ENCODE measurements at regions of chr1 and their contacts with region 1.

Region 1: GRCh38 chr1:214551436-214552173 is at the start of gene PTPN14:
- DNase-seq: peak; percentile 96
- ATAC-seq: peak; percentile 88
- H3K4me3 ChIP-seq: peak within 1 kb of the TSS; percentile 76
- H3K27ac ChIP-seq: peak within 1 kb of the TSS; percentile 97
- H3K4me1 ChIP-seq: peaks cover 6% of the 10 kb centered on the region
- H3K27me3 ChIP-seq: no peaks in the 10 kb centered on the region
- CTCF ChIP-seq: peak; percentile 59
- POLR2A ChIP-seq: peak; percentile 81
- RAD21 ChIP-seq: peak; percentile 37; the same call in 1 of the 2 replicates
- total RNA-seq, gene PTPN14: 31.7 and 42.8 TPM in 2 replicates

Region 2: DNA sequence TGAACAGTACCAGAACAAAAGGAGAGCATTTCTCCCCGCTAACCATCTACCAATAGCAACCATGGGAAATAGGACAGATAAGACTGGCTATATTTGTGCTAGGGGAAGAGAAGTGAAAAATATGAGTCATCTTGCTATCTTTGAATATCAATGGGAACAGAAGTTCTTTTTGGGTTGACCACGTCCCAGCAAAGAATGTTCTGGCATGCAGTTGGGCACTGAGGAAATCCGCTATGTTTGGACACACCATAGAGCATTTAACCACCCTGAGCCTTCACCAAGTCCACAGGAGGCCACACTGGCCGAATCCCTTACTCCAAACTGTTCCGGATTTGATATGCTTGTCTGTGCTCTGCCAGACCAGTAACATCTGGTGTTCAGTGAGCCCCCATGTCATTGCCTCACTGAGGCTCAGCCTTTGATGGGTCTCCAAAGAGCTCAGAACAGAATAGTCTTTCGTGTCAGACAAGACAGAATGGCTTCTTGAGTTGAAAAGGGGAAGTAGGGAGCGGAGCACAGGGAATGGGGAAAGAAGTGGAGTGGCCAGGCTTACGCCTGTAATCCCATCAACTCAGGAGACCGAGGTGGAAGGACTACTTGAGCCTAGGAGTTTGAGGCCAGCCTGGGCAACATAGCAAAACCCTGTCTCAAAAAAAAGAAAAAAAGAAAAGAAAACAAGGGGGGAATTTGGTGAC is 189.3 kb before region 1 on chr1:
- CTCF ChIA-PET with region 1: no interaction called
- POLR2A ChIA-PET with region 1: no interaction called
- dilution Hi-C with region 1: no loop called
- in situ Hi-C with region 1: no loop called
- intact Hi-C with region 1: no loop called
- DNase-seq: peak; percentile 32
- ATAC-seq: peak; percentile 29; the same call in 1 of the 2 replicates
- H3K4me3 ChIP-seq: no peak overlapping the region
- H3K27ac ChIP-seq: no peak overlapping the region
- H3K4me1 ChIP-seq: no peaks in the 10 kb centered on the region
- H3K27me3 ChIP-seq: no peaks in the 10 kb centered on the region
- CTCF ChIP-seq: no peak
- POLR2A ChIP-seq: no peak
- RAD21 ChIP-seq: no peak

Region 3: GRCh38 chr1:214377886-214378285 is 173.7 kb before region 1 on chr1:
- CTCF ChIA-PET with region 1: no interaction called
- POLR2A ChIA-PET with region 1: no interaction called
- dilution Hi-C with region 1: no loop called
- in situ Hi-C with region 1: no loop called
- intact Hi-C with region 1: loop called (anchors 5 kb)
- DNase-seq: peak; percentile 80
- ATAC-seq: peak; percentile 89
- H3K4me3 ChIP-seq: no peak overlapping the region
- H3K27ac ChIP-seq: peak overlapping the region; percentile 76; the same call in 1 of the 2 replicates
- H3K4me1 ChIP-seq: peaks cover 13% of the 10 kb centered on the region
- H3K27me3 ChIP-seq: no peaks in the 10 kb centered on the region
- CTCF ChIP-seq: no peak
- POLR2A ChIP-seq: no peak
- RAD21 ChIP-seq: no peak

Region 4: GRCh38 chr1:214446772-214447556 is 104.6 kb before region 1 on chr1:
- CTCF ChIA-PET with region 1: no interaction called
- POLR2A ChIA-PET with region 1: interaction called, 3 read pairs
- dilution Hi-C with region 1: no loop called
- in situ Hi-C with region 1: no loop called
- intact Hi-C with region 1: loop called (anchors 2 kb)
- DNase-seq: peak; percentile 93
- ATAC-seq: peak; percentile 80
- H3K4me3 ChIP-seq: peak overlapping the region; percentile 22; the same call in 1 of the 2 replicates
- H3K27ac ChIP-seq: peak overlapping the region; percentile 85
- H3K4me1 ChIP-seq: peaks cover 15% of the 10 kb centered on the region
- H3K27me3 ChIP-seq: no peaks in the 10 kb centered on the region
- CTCF ChIP-seq: no peak
- POLR2A ChIP-seq: peak; percentile 30
- RAD21 ChIP-seq: 0 out of 2 replicates have a peak, but pooled peaks have one; percentile 6

Region 5: GRCh38 chr1:214506972-214507482 is 44.6 kb before region 1 on chr1:
- CTCF ChIA-PET with region 1: no interaction called
- POLR2A ChIA-PET with region 1: no interaction called
- dilution Hi-C with region 1: no loop called
- in situ Hi-C with region 1: no loop called
- intact Hi-C with region 1: no loop called
- DNase-seq: no peak
- ATAC-seq: no peak
- H3K4me3 ChIP-seq: no peak overlapping the region
- H3K27ac ChIP-seq: no peak overlapping the region
- H3K4me1 ChIP-seq: 0 out of 2 replicates have a peak, but pooled peaks cover 7% of the 10 kb centered on the region
- H3K27me3 ChIP-seq: no peaks in the 10 kb centered on the region
- CTCF ChIP-seq: no peak
- POLR2A ChIP-seq: no peak
- RAD21 ChIP-seq: no peak

Region 6: GRCh38 chr1:214584805-214585766 is 33.5 kb after region 1 on chr1:
- CTCF ChIA-PET with region 1: interaction called, 5 read pairs
- POLR2A ChIA-PET with region 1: interaction called, 3 read pairs
- dilution Hi-C with region 1: no loop called
- in situ Hi-C with region 1: no loop called
- intact Hi-C with region 1: loop called (anchors 1 kb)
- DNase-seq: peak; percentile 73
- ATAC-seq: peak; percentile 85
- H3K4me3 ChIP-seq: no peak overlapping the region
- H3K27ac ChIP-seq: no peak overlapping the region
- H3K4me1 ChIP-seq: peaks cover 2% of the 10 kb centered on the region; the same call in 1 of the 2 replicates
- H3K27me3 ChIP-seq: peaks cover 1% of the 10 kb centered on the region
- CTCF ChIP-seq: peak; percentile 93
- POLR2A ChIP-seq: no peak
- RAD21 ChIP-seq: peak; percentile 88

Measured in IMR-90 (cell line).